Activated CD8-positive, alpha-beta T cell treated with anti-CD3 and anti-CD28 coated beads, Interleukin-2, amount 10 ng/mL, durations not matched to agents 7 days and 5 days (primary cell): ENCODE measurements at regions of chr3 and their contacts with region 1.

Region 1: GRCh38 chr3:186849374-186849975 is 7.0 kb downstream of the ADIPOQ start:
- DNase-seq: no peak
- ATAC-seq: peak; percentile 75
- H3K4me3 Mint-ChIP-seq: no peak overlapping the region
- H3K27ac Mint-ChIP-seq: no peak overlapping the region
- H3K4me1 Mint-ChIP-seq: peaks cover 10% of the 10 kb centered on the region
- H3K27me3 Mint-ChIP-seq: peaks cover 14% of the 10 kb centered on the region

Region 2: GRCh38 chr3:186882881-186883685 is 33.6 kb after region 1 on chr3:
- CTCF ChIA-PET with region 1: interaction called, 17 read pairs
- POLR2A ChIA-PET with region 1: no interaction called
- DNase-seq: peak; percentile 24
- ATAC-seq: peak; percentile 62
- H3K4me3 Mint-ChIP-seq: no peak overlapping the region
- H3K27ac Mint-ChIP-seq: peak overlapping the region; percentile 5
- H3K4me1 Mint-ChIP-seq: peaks cover 43% of the 10 kb centered on the region
- H3K27me3 Mint-ChIP-seq: no peaks in the 10 kb centered on the region

Region 3: DNA sequence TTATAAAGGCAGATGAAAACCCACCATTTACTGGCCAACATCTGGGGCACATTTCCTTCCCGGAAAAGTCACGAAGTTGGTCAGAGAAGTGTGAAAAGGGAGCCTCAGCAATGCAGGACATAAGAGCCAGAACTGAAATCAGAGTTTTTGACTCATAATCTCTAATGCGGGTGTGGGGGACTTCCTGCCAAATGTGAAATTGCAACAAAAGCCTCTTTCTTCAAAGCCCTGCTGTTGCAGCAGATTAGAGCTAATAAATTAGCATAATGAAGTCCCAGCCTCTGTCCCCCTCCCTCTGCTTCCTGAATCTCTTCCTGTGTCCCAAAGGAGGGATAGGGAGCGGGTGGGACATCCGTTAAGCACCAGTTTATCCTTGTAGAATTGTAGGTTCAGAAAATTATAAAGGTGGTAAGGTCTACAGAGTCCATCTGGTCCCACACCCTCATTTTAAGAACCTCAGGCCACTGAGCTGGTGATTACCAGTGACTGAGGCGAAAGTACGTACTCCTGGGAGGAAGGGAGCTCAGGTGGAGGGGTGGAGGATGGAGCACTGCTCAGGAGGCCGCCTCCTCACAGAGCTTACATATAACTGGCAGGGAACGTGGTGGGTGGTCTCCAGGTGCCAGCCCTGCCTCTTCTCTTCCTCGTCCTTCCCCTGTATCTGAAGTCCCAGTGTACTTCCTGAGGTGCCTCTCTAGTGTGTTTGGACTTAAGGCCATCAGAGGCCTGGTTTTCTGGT is 115.8 kb after region 1 on chr3:
- CTCF ChIA-PET with region 1: interaction called, 11 read pairs
- POLR2A ChIA-PET with region 1: no interaction called
- DNase-seq: no peak
- ATAC-seq: no peak
- H3K4me3 Mint-ChIP-seq: no peak overlapping the region
- H3K27ac Mint-ChIP-seq: no peak overlapping the region
- H3K4me1 Mint-ChIP-seq: peaks cover 26% of the 10 kb centered on the region
- H3K27me3 Mint-ChIP-seq: no peaks in the 10 kb centered on the region

Region 4: GRCh38 chr3:187041362-187042307 is 192.2 kb after region 1 on chr3:
- CTCF ChIA-PET with region 1: interaction called, 18 read pairs
- POLR2A ChIA-PET with region 1: no interaction called
- DNase-seq: peak; percentile 79
- ATAC-seq: peak; percentile 94
- H3K4me3 Mint-ChIP-seq: peak overlapping the region; percentile 65
- H3K27ac Mint-ChIP-seq: peak overlapping the region; percentile 95
- H3K4me1 Mint-ChIP-seq: peaks cover 74% of the 10 kb centered on the region
- H3K27me3 Mint-ChIP-seq: no peaks in the 10 kb centered on the region

Region 5: GRCh38 chr3:187112934-187113793 is 263.7 kb after region 1 on chr3:
- CTCF ChIA-PET with region 1: interaction called, 35 read pairs
- POLR2A ChIA-PET with region 1: interaction called, 4 read pairs
- DNase-seq: no peak
- ATAC-seq: no peak
- H3K4me3 Mint-ChIP-seq: no peak overlapping the region
- H3K27ac Mint-ChIP-seq: no peak overlapping the region
- H3K4me1 Mint-ChIP-seq: peaks cover 9% of the 10 kb centered on the region
- H3K27me3 Mint-ChIP-seq: no peaks in the 10 kb centered on the region

Region 6: DNA sequence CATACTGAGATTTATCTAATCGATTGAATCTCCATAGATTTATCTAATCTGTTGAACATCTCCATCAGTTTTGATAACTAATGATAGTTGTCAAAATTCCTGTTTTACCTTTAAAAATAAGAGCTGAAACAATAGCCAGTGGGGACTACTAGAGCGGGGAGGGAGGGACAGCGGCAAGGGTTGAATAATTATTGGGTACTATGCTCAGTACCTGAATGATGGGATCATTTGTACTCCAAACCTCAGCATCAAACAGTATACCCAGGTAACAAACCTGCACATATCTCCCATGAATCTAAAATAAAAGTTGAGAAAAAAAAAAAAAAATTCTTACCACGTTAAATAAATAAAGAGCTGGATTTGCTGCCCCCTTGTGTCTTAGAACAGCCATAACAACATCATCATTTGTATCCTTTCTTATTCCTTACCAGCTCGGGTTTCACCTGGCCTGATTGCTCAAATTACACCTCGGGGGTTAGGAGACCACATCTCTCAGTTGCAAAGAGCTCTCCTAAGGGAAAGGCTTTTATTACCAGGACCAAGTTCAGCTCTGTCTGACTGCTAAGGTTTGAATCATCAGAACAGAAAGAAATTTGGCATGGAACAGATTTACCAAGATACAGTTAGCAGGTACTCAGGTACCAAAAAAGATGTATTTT is 315.5 kb after region 1 on chr3:
- CTCF ChIA-PET with region 1: interaction called, 48 read pairs
- POLR2A ChIA-PET with region 1: interaction called, 3 read pairs
- DNase-seq: peak; percentile 63
- ATAC-seq: peak; percentile 47
- H3K4me3 Mint-ChIP-seq: no peak overlapping the region
- H3K27ac Mint-ChIP-seq: no peak overlapping the region
- H3K4me1 Mint-ChIP-seq: peaks cover 4% of the 10 kb centered on the region
- H3K27me3 Mint-ChIP-seq: peaks cover 36% of the 10 kb centered on the region

Region 7: DNA sequence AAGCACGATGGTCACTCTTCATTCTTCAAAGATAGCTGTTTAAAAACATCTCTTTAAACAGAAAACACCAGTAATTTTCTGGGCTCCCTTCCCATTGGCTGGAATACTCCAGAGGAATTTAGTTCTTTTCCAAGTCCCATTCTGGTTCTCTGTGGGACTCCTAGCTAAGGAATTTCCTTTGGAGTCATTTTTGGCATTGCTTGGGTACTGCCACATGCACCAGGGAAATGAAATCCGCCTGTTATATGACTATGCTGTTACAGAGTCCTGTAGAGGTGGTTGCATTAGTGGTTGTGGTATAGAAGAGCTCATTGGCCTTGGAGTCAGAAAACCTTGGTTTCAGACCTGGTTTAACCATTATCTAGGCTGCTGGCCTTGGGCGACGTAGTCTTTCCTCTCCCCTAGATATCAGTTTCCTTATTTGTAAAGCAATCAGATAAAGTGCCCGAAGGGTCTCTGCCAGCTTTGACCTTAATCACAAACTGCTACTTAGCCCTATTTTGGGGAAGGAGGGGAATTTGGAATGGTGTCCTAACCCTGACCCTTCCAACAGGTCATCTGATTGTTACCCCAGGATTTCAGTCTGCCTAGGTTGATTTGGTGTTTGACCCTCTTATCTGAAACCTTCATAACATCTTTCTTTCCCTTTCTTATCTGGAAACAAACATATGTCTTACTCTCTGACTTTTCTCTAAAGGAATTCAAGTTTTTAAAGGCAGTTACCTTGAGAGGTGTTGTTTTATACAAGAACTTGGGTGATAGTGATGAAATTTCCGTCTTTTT is 361.3 kb after region 1 on chr3:
- CTCF ChIA-PET with region 1: no interaction called
- POLR2A ChIA-PET with region 1: no interaction called
- DNase-seq: no peak
- ATAC-seq: no peak
- H3K4me3 Mint-ChIP-seq: no peak overlapping the region
- H3K27ac Mint-ChIP-seq: no peak overlapping the region
- H3K4me1 Mint-ChIP-seq: no peaks in the 10 kb centered on the region
- H3K27me3 Mint-ChIP-seq: peaks cover 19% of the 10 kb centered on the region